ENCODE measurements at regions of chr14 and their contacts with region 1.

Region 1: DNA sequence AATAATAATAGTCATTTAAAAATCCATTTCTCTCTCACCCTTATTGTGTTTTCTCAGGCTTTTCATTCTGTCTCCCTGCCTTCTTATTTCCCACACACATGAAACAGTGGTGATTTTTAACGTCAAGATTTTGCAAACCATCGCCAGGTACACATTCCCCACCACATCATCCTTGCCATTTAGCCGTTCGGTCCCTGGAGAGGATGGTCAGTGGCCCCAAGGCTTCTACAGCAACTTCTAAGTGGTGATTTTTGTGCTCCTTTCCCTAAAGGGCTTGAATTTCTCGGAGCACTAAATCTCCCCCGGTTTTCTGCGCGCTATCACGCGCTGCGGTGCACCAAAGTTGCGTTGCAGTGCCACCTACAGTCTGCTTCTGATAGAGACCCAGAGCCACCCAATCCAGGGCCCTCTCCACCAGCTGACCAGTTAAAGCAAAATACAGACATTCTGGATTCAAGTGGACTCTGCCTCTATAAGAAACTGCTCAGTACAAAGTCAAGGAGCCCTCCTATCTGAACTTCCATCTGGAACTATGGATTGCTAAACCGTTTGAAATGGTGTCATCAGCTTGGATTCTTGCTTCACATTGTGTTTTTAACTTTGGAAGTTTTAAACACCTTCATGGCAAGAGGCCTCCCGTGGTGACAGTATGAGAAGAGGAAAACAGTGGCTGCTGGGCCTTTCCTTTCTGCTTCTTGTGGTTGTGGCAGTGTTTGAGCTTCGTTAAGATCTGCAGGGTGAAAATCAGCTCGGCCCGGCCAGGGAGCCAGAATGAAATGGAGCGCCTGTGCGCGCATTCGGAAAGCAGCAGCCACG is 234.0 kb downstream of the SPTSSA start:
- DNase-seq: peak; percentile 77
- H3K4me3 ChIP-seq: peak overlapping the region in 2 of 4 donors; percentile 3 to 26
- H3K27ac ChIP-seq: peak overlapping the region in 3 of 4 donors; percentile 1 to 63 (median 56)
- H3K4me1 ChIP-seq: peaks cover 0 to 32% (median 8%) of the 10 kb centered on the region in 4 donors
- H3K27me3 ChIP-seq: no peaks in the 10 kb centered on the region
- CTCF ChIP-seq: peak; percentile 64 to 82 (median 74)
- EP300 ChIP-seq: no peak
- POLR2A ChIP-seq: no peak

Region 2: DNA sequence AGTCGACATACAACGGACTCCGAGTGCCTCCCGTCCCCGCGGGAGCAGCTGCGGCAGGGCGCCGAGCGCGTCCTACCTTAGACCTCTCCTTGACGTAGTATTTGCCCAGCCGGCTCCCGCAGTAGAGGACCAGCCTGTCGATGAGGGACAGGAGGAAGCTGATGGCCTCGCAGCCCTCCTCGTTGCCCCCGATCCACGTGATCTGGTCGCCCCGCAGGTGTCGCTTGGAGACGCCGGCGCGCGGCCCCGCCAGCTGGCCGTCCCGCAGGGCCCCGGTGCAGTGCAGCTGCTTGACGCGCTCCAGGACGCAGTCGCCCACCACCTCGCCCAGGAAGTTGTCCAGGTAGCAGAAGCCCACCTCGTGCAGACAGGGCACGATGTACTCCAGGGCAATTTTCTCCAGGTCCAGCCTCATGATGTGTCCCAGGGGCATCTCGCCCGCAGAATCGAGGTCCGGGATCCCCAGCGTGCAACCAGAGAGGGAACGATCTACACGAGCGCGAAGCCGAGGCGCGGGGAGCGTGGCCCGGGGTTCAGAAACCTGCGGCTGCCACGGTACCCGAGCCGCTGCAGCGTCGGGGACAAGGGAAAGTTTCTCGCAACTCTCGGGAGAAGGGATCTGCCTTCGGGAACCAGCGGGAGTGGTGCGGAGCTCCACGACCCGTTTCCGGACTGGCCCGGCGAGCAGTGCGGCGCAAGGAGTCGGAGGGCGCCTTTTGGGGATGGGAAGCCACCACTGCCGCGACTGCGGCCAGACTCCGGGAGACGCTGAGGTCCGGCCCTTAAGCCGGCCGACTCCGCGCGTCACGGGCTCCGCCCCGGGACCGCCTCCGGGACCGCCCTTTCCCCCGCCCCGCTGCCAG is 277.5 kb before region 1 on chr14 and contains the start of gene EGLN3:
- intact Hi-C with region 1: loop called (anchors 5 kb)
- DNase-seq: peak; percentile 95
- H3K4me3 ChIP-seq: peak within 1 kb of the TSS; percentile 63 to 83 (median 78)
- H3K27ac ChIP-seq: peak within 1 kb of the TSS; percentile 79 to 88 (median 85)
- H3K4me1 ChIP-seq: peaks cover 0 to 44% (median 28%) of the 10 kb centered on the region in 4 donors
- H3K27me3 ChIP-seq: no peaks in the 10 kb centered on the region
- CTCF ChIP-seq: no peak
- EP300 ChIP-seq: peak in 1 of 4 donors; percentile 49
- POLR2A ChIP-seq: peak; percentile 96 to 98
- total RNA-seq, gene EGLN3: 13.0 to 18.5 (median 13.2) TPM

Region 3: GRCh38 chr14:34059855-34060638 is 168.0 kb before region 1 on chr14:
- intact Hi-C with region 1: loop called (anchors 5 kb)
- DNase-seq: peak; percentile 90
- H3K4me3 ChIP-seq: peak overlapping the region; percentile 60 to 65 (median 61)
- H3K27ac ChIP-seq: peak overlapping the region; percentile 83 to 89 (median 84)
- H3K4me1 ChIP-seq: peaks cover 0 to 27% (median 23%) of the 10 kb centered on the region in 4 donors
- H3K27me3 ChIP-seq: no peaks in the 10 kb centered on the region
- CTCF ChIP-seq: peak in 1 of 4 experiments; percentile 15
- EP300 ChIP-seq: no peak
- POLR2A ChIP-seq: peak; percentile 18 to 41

Region 4: GRCh38 chr14:34283590-34283989 is 55.5 kb after region 1 on chr14:
- intact Hi-C with region 1: no loop called
- DNase-seq: no peak
- H3K4me3 ChIP-seq: no peak overlapping the region
- H3K27ac ChIP-seq: no peak overlapping the region
- H3K4me1 ChIP-seq: no peaks in the 10 kb centered on the region
- H3K27me3 ChIP-seq: no peaks in the 10 kb centered on the region
- CTCF ChIP-seq: no peak
- EP300 ChIP-seq: no peak
- POLR2A ChIP-seq: no peak

Region 5: DNA sequence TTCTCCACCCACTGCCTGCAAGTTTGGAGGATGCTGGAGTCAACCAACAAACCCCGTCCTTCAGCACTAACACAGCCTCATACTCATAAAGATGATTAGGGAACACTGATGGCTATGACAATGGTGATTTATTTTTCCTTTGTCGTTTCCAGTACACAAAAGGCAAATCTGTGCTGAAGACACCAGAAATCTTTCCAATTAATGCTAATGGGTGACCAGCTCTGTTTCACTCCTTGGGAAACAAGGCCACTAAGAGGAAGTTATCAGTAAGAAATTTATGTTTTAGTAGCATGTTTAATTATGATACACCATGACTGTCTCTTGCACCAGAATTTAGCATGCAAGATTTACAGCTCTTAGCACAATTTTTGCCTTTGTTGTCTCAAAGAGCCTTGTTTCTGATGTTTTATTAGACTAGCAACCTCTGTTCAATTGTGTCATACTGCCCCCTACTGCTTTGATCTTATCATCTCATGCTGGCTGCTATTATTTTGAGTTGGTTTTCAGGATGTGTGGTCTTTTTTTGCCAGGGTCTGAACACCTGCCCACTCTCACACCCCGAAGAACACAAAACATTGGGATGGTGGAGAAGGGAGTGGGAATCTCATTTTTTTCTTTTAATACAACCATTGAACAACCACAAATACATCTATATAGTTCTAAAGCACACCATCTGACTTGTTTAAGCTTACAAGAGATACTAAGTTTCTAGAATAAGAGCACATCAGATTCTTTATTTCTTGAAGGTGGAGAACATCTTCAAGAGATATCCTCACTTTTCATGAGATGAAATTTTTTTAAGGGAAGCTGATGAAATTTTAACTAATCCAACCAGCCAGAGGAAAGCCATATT is 73.1 kb after region 1 on chr14:
- intact Hi-C with region 1: loop called (anchors 5 kb)
- DNase-seq: no peak
- H3K4me3 ChIP-seq: no peak overlapping the region
- H3K27ac ChIP-seq: no peak overlapping the region
- H3K4me1 ChIP-seq: peaks cover 0 to 14% (median 7%) of the 10 kb centered on the region in 4 donors
- H3K27me3 ChIP-seq: no peaks in the 10 kb centered on the region
- CTCF ChIP-seq: peak; percentile 30 to 57 (median 52)
- EP300 ChIP-seq: no peak
- POLR2A ChIP-seq: no peak

Measured in sigmoid colon (tissue), 7 donors.